Activated CD4-positive, alpha-beta T cell treated with anti-CD3 and anti-CD28 coated beads, Interleukin-2, amount 10 ng/mL, durations not matched to agents 24 days and 14 days (primary cell): ENCODE measurements at regions of chr1 and their contacts with region 1.

Region 1: GRCh38 chr1:66271216-66271903 is 262.6 kb upstream of the SGIP1 start:
- DNase-seq: peak; percentile 81
- H3K4me3 Mint-ChIP-seq: peak overlapping the region; percentile 67
- H3K27ac Mint-ChIP-seq: peak overlapping the region; percentile 88
- H3K4me1 Mint-ChIP-seq: peaks cover 62% of the 10 kb centered on the region
- H3K27me3 Mint-ChIP-seq: no peaks in the 10 kb centered on the region

Region 2: GRCh38 chr1:65894738-65895605 is 376.4 kb before region 1 on chr1:
- intact Hi-C with region 1: no loop called
- DNase-seq: no peak
- H3K4me3 Mint-ChIP-seq: no peak overlapping the region
- H3K27ac Mint-ChIP-seq: no peak overlapping the region
- H3K4me1 Mint-ChIP-seq: peaks cover 2% of the 10 kb centered on the region
- H3K27me3 Mint-ChIP-seq: peaks cover 14% of the 10 kb centered on the region

Region 3: DNA sequence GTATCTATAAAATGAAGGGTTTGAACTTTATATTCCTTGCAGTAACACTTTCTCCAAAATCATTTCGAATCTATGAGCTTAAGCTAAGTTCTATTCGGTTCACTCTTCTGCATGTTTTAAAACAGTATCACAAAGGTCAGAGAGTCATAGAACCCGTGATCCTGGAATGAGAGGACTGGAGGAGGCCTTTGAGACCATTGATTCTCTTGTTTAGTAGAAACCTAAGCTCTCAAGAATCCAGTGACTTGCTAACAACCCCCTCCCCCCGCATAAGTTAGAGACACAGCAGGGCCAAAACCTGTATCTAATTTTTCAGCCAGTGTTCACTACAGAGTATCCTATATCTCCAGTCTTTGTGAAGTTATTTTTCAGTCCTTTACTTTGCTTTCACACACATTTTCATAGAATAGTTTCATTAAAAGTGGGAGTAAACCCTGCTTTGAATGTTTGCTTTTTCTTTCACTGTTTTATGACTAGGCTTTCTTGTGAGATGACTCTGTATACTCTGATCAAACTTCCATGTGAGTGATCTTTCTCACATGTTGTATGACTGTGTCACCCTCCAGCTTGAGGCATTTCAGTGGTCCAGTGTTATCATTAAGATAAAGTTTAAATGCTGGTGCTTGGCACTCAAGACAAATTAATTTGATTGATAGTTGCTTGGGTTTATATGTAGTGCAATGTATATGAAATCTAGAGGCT is 12.8 kb before region 1 on chr1:
- intact Hi-C with region 1: loop called (anchors 1 kb)
- DNase-seq: no peak
- H3K4me3 Mint-ChIP-seq: no peak overlapping the region
- H3K27ac Mint-ChIP-seq: peak overlapping the region; percentile 59
- H3K4me1 Mint-ChIP-seq: peaks cover 57% of the 10 kb centered on the region
- H3K27me3 Mint-ChIP-seq: no peaks in the 10 kb centered on the region

Region 4: DNA sequence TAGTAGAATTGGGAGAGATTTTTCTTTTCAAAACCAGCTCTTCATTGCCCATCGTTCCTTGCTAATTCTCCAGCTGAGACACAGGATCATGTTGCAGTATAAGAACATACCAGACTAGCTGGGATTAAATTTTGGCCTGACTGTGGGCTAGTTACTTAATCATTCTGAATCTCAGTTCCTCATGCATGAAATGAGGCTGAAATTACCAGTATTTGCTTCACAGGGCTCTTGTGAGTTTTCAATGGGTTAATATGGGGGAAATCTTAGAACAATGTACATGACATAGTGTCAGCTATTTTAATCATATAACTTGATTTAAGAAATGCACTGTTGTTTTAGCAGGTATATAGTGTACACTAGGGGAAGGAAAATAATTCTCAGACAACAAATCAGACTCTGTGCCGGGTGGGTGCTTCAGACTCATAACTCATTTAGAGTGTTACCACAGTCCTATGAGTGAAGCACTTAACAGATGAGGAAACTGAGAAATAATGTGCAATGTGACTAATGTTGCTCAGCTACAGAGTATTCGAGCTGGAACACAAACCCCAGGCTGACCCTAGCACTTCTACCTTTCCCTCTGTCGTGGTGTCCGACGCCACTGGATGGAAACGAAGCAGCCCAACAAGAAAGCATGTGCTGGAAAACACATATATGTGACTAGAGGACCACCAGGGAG is 125.0 kb after region 1 on chr1:
- intact Hi-C with region 1: no loop called
- DNase-seq: no peak
- H3K4me3 Mint-ChIP-seq: no peak overlapping the region
- H3K27ac Mint-ChIP-seq: no peak overlapping the region
- H3K4me1 Mint-ChIP-seq: peaks cover 29% of the 10 kb centered on the region
- H3K27me3 Mint-ChIP-seq: no peaks in the 10 kb centered on the region

Region 5: DNA sequence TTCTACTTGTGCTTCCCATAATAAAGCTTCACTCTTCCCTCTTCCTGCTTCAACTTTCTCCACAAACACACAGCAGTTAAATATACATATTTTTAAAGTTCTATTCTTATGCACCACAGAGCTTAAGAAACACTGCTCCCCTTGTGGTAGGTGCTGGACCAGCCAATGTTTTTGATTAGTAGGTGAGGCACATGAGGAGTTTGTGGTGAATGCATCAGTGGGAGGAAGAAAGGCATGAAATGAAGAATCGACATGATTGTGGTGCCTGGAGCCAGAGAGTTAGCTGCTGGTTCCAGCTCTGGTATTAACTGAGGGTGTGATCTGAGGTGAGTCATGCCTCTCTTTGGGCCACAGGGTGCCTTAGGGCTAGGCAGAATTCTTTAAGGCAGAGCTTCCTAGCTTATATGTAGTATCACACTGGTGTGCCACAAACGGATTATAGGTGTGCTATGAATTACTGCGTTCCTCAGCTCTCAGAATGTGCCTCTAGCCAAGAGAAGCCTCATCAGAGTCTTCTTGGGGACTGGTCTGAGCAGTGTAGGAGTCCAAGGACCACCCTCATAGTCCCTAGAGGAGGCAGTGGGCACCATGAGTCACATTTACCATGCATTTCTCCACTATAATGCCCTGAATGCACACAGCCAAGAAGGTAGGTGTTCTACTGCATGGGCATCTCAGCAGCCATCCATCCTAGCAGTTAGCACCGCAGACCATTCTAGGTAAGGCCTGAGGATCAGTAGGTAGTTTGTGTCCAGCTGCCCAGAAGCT is 165.2 kb after region 1 on chr1:
- intact Hi-C with region 1: loop called (anchors 1 kb)
- DNase-seq: peak; percentile 80
- H3K4me3 Mint-ChIP-seq: no peak overlapping the region
- H3K27ac Mint-ChIP-seq: peak overlapping the region; percentile 7
- H3K4me1 Mint-ChIP-seq: peaks cover 33% of the 10 kb centered on the region
- H3K27me3 Mint-ChIP-seq: no peaks in the 10 kb centered on the region